ENCODE measurements at regions of chr22 and their contacts with region 1.

Region 1: GRCh38 chr22:33049119-33049729 is 9.0 kb downstream of the SYN3 start:
- DNase-seq: peak; percentile 41
- H3K4me3 ChIP-seq: no peak overlapping the region
- H3K27ac ChIP-seq: no peak overlapping the region
- H3K4me1 ChIP-seq: no peaks in the 10 kb centered on the region
- H3K27me3 ChIP-seq: peaks cover 10% of the 10 kb centered on the region
- CTCF ChIP-seq: peak; percentile 95

Region 2: DNA sequence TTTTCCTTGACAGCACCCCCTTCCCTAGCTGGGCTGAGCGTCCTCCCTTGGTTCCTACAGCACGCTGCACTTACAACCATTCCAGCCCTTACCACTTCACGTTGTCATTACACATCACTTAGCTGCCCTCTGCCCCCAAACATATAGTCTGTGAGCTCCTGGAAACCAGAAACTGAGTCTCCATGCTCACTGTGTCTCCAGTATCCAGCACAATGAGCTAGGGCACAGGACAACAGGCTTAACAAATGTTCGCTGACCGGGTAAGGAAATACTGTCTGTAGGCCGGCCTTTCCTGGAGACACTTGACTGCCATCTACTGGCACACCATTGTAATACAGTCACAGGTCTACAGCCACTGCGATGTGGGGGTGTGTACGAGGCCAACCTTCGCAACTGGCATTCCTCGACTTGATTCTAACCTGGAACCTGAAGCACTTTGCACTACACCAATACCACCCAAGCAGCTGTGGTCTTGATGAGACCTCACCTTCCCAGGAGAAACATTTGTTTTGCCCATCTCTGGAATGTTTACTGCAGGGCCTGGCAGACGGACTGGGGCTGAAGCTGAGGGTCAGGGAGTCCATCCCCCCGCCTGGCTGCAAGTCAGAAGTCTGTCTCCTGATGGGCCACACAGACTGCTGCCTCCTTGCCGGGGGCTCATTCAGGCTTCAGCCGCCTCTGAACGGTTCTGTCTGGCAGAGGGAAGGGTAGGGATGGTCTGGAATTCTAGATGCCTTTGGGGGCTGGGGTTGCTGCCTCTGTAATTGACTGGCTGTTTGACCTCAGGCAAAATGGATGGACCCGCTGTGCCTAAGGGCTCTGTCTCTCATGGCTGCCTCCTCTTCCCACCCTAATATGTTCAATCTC is 63.1 kb before region 1 on chr22:
- CTCF ChIA-PET with region 1: no interaction called
- dilution Hi-C with region 1: no loop called
- in situ Hi-C with region 1: no loop called
- intact Hi-C with region 1: no loop called
- DNase-seq: peak; percentile 75
- H3K4me3 ChIP-seq: no peak overlapping the region
- H3K27ac ChIP-seq: peak overlapping the region; percentile 80
- H3K4me1 ChIP-seq: peaks cover 34% of the 10 kb centered on the region
- H3K27me3 ChIP-seq: no peaks in the 10 kb centered on the region
- CTCF ChIP-seq: peak; percentile 86 to 92

Region 3: GRCh38 chr22:33018232-33018864 is 30.9 kb before region 1 on chr22:
- CTCF ChIA-PET with region 1: interaction called, 11 read pairs
- dilution Hi-C with region 1: no loop called
- in situ Hi-C with region 1: no loop called
- intact Hi-C with region 1: loop called (anchors 1 kb)
- DNase-seq: no peak
- H3K4me3 ChIP-seq: no peak overlapping the region
- H3K27ac ChIP-seq: no peak overlapping the region
- H3K4me1 ChIP-seq: no peaks in the 10 kb centered on the region
- H3K27me3 ChIP-seq: no peaks in the 10 kb centered on the region
- CTCF ChIP-seq: peak; percentile 93 to 95

Measured in mammary epithelial cell (primary cell).